ENCODE measurements at regions of chr10 and their contacts with region 1.

Region 1: DNA sequence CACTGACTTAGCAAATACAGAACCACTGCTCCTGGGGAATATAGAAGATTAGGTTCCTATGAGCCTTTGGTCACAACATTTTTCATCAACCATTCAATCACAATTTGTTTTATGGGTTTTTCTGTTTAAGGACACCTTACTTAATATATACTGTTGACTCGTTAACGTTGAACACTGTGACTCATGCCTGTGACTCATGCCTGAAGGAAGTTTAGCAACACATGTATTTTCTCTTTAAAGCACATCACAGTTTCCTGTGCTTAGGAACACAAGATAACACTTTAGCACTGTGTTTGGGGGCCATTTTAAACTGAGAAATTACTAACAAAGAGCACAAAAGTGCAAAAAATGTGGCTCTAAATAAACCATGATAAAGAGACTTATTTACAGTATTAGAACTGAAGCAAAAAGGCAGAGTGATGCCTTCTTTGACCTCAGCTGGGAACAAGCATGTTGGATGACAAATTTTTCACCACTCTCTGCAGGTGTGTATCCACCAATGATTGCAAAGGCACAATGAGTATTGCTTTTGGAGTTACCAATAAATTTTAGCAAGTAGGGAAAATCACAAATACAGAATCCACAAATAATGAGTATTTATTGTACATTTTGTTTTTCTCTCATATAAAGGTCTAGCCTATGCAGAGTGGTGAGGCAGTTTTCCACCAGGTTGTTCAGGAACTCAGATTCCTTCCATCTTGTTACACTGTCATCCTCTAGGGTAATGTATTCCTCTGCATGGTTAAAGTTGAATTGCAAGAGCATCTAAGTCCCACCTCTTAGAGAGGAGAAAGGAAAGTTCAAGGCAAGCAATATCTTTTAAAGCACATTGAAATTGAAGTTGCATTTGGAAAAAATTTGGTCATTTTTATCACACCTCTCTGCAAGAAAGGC is 7.3 kb downstream of the FGFBP3 start:
- DNase-seq: peak in 1 of 2 donors; percentile 60
- H3K4me3 ChIP-seq: no peak overlapping the region
- CTCF ChIP-seq: no peak
- POLR2A ChIP-seq: no peak

Region 2: GRCh38 chr10:91607646-91608403 is 294.2 kb before region 1 on chr10:
- intact Hi-C with region 1: loop called (anchors 2 kb)
- DNase-seq: peak in 1 of 2 donors; percentile 43
- H3K4me3 ChIP-seq: no peak overlapping the region
- CTCF ChIP-seq: no peak
- POLR2A ChIP-seq: no peak

Region 3: DNA sequence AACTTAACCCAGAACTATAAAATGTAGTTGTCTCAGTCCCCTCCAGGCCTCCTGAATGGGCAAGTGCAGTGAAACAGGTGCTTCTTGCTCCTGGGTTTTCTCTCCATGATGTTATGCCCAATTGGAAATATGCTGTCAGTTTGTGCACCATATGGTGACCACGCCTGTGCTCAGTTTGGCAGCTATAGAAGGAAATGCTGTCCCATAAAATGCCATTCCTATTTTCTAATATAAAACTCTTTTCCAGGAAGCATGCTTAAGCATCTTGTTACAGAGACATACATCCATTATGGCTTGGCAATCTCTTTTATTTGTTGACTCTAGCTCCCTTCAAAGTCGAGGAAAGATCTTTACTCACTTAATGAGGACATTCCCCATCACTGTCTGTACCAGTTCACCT is 37.9 kb before region 1 on chr10:
- intact Hi-C with region 1: loop called (anchors 2 kb)
- DNase-seq: no peak
- H3K4me3 ChIP-seq: no peak overlapping the region
- CTCF ChIP-seq: no peak
- POLR2A ChIP-seq: no peak

Region 4: DNA sequence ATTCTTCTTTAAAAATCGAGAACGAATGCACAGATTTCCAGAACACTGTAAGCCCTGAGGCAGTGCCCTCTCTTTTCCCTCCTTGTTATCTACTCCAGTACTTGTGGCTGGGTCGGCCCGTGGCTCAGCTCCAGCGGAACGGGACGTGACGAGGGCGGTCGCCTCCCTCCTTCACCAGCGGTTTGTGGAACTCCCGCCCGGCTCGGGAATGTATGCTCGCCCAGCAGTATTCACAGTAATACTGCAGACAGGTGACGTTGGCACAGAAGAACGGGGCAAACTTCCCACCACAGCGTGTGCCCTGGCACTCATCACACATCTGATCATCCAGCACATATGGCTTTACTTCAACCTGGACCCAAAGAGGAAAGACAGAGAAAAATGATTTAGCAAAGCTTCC is 150.1 kb after region 1 on chr10:
- intact Hi-C with region 1: no loop called
- DNase-seq: no peak
- H3K4me3 ChIP-seq: no peak overlapping the region
- CTCF ChIP-seq: no peak
- POLR2A ChIP-seq: no peak

Region 5: DNA sequence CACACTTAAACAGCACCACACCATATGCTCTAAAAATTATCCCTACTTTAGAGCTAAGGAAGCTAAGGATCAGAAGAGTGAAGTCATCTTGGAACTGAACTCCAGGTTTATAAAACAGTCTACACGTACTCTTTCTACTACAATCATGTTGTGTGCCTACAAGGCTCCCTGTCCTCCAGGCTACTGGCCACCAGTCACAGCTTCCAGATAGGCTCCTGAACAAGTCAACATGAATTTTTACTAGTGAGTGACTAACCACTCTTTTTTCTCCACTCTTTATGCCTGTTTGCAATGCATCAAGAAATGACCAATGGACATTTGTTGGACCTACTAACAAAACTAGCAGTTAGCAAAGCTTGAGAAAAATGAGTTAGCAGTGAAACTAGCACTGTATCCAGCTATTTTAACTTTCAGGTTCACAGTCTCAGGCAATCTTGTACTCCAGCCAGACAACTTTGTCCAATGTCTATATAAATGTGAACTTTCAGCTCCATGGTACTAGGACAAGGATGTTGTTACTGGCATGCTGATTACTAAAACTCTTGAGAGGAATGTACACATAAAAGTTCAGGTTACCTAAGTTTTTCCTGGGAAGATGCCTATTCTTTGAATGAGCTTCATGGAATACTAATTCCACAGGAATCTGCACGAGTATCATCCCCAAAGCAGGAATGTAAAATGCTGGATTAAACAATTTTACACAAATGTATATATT is 201.5 kb after region 1 on chr10:
- intact Hi-C with region 1: no loop called
- DNase-seq: no peak
- H3K4me3 ChIP-seq: no peak overlapping the region
- CTCF ChIP-seq: no peak
- POLR2A ChIP-seq: no peak

Measured in lower leg skin (tissue), 4 donors.